ENCODE measurements at regions of chr5 and their contacts with region 1.

Region 1: GRCh38 chr5:150272526-150272925 is 17.0 kb downstream of the CAMK2A start:
- DNase-seq: no peak
- ATAC-seq: peak; percentile 6
- H3K4me3 ChIP-seq: no peak overlapping the region
- H3K27ac ChIP-seq: no peak overlapping the region
- H3K4me1 ChIP-seq: no peaks in the 10 kb centered on the region
- H3K27me3 ChIP-seq: no peaks in the 10 kb centered on the region
- CTCF ChIP-seq: peak; percentile 27

Region 2: DNA sequence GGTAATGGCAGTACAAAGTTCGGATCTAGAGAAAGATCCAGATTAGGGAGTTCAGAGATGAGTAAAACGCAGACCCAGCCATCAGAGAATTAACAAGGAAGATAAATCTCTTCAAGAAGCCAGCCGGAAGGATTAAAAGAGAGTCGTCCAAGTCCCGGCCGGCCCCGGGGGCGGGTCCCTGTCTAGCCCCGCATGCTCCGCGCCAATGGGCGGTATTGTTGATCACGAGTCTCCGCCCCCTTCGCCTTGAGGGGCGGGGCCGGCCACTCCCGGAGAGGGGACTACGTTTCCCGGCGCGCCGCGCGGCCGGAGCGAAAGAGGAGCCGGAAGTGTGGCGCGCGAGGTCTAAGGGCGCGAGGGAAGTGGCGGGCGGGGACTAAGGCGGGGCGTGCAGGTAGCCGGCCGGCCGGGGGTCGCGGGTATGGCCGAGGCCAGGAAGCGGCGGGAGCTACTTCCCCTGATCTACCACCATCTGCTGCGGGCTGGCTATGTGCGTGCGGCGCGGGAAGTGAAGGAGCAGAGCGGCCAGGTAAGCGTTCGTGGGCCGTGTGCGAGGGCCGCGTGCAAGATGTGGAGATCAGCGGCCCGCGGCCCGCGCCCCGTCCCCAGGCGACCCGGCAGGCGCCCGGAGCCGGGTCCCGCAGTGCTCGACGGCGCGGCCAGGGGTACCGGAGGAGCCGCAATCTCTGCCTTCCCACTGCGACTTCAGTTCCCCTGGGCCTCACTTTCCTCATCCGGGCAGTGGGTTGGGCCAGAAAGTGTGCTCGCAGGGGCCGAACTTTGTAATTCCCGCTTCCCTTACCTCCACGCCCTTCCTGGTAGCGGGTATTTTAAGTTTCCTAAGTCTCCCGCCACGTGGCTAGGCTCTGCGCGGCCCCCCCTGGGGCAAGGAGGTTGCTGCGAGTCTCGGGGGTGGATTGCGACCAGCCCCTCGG is 85.1 kb after region 1 on chr5 and contains the start of gene TCOF1:
- intact Hi-C with region 1: loop called (anchors 10 kb)
- DNase-seq: peak; percentile 98
- ATAC-seq: peak; percentile 98
- H3K4me3 ChIP-seq: peak within 1 kb of the TSS; percentile 95
- H3K27ac ChIP-seq: peak within 1 kb of the TSS; percentile 53
- H3K4me1 ChIP-seq: peaks cover 13% of the 10 kb centered on the region
- H3K27me3 ChIP-seq: no peaks in the 10 kb centered on the region
- CTCF ChIP-seq: no peak
- total RNA-seq, gene TCOF1: 31.1 TPM